Astrocyte of the cerebellum (primary cell): ENCODE measurements at regions of chr2 and their contacts with region 1.

Region 1: GRCh38 chr2:189633392-189633811 is 27.9 kb upstream of the ASNSD1 start:
- DNase-seq: no peak
- H3K4me3 ChIP-seq: no peak overlapping the region
- CTCF ChIP-seq: peak; percentile 34

Region 2: GRCh38 chr2:189466660-189467059 is 166.7 kb before region 1 on chr2:
- in situ Hi-C with region 1: loop called (anchors 25 kb)
- DNase-seq: peak; percentile 15
- H3K4me3 ChIP-seq: no peak overlapping the region
- CTCF ChIP-seq: peak; percentile 68